ENCODE measurements at regions of chr12 and their contacts with region 1.

Region 1: DNA sequence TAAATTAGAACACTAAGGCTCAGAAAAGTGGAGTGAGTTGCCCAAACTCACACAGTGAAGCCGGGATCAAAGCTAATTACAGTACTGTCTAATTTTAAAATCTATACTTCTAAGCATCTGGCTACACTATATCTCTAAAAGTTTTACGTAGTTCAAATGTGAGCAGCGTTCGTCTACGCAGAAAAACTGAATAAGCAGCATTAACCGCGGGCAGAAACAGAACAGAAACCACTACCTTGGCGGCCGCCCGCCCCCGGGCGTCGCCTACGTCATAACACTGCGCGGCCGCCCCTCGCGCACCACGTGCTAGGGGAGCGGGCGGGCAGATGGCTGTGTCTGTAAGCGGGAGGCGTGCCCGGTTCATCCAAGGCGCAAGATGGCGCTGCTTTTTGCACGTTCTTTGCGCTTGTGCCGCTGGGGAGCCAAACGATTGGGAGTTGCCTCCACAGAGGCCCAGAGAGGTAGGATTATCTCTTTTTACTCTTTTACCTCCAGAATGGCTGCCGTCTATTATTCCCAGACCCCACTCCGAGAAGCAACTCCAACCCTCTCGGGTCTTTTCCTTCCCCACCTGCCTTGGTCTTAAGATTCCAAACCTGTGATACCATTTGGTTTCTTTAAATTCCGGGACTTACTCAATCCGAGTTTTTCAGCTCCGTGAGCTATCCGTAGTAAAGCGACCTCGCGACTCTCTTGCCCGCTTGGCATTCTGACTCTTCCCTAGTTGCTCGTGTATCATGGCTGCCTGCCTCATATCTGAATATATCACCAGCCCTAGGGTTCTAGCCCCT is at the start of gene SPRYD4:
- DNase-seq: peak; percentile 95
- ATAC-seq: peak; percentile 97
- H3K4me3 Mint-ChIP-seq: peak within 1 kb of the TSS; percentile 87
- H3K27ac Mint-ChIP-seq: peak within 1 kb of the TSS; percentile 93
- H3K4me1 Mint-ChIP-seq: peaks cover 28% of the 10 kb centered on the region
- H3K27me3 Mint-ChIP-seq: no peaks in the 10 kb centered on the region
- total RNA-seq, gene SPRYD4: 2.9 to 3.1 TPM

Region 2: DNA sequence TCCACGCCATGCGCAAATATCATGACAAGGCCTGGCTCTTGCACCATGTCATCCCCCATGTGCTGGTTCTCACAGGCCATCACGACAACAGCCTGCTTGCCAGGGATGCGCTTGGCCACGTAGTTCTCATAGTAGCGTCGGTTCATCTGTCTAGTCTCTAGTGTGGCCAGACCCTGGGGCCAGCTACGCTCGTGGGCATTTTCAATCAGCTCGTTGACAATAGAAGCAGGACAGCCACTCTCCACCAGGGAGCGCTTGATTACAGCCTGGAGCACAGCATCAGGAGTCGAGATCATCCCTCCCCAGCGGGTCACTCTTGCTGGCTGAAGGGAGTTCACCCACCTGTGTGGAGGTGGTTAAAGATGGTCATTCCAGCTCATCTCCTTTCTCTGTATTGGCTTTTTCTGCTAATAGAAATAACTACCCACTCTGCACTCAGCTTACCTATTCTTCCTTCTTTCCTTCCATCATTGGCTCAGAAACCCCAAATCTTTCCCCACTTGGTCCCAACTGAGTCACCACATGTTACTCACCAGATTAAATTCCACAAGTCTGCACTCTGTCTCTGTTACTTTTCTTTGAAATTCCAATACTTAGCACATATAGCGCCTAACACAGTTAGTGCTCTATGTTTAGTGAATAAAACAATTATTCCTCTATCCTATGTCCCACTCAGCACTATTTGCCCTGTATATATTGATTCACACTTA is 261.8 kb before region 1 on chr12:
- CTCF ChIA-PET with region 1: interaction called, 17 read pairs
- POLR2A ChIA-PET with region 1: no interaction called
- DNase-seq: peak; percentile 56
- ATAC-seq: peak; percentile 62
- H3K4me3 Mint-ChIP-seq: no peak overlapping the region
- H3K27ac Mint-ChIP-seq: no peak overlapping the region
- H3K4me1 Mint-ChIP-seq: no peaks in the 10 kb centered on the region
- H3K27me3 Mint-ChIP-seq: no peaks in the 10 kb centered on the region

Region 3: GRCh38 chr12:56286044-56286830 is 182.2 kb before region 1 on chr12:
- CTCF ChIA-PET with region 1: interaction called, 13 read pairs
- POLR2A ChIA-PET with region 1: no interaction called
- DNase-seq: no peak
- ATAC-seq: no peak
- H3K4me3 Mint-ChIP-seq: no peak overlapping the region
- H3K27ac Mint-ChIP-seq: no peak overlapping the region
- H3K4me1 Mint-ChIP-seq: peaks cover 20% of the 10 kb centered on the region
- H3K27me3 Mint-ChIP-seq: no peaks in the 10 kb centered on the region

Region 4: DNA sequence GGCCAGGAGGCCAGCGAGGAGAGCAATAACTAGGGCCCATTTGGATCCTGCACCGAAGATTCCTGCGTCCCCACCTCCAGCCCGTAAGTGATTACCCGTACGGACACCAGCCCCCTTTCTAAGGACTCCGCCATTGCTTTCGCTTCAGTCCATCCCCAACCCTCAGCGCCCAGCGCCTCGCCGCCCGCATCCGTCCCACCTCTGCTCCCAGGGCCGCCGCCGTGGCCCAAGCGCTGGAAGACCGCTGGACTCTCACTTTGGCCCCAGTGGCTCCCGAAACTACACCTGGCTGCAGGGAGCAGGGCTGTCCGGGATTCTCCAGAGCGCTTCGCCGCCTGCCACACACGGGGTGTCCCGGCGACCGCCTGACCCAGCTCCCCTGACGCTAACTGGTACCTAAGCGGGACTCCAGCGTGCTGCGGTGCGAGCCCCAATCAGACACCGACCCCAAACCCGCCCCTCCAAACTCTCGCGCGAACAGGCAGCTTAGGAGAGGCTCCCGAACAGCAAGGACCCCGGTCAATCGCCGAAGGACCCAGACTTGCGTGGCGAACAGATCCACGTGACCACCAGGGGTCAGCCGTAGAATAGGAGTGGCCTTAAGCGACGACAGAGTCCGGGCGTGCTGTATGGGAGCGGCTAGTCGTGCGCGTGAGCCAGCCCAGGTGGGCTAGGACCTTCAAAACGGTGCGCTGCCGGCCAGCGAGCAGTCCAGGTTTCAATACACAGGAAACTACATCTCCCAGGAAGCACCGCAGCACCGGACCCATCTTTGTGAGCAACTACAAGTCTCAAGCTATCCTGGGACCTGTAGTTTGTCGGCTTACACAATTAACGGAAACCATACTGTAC is 152.6 kb before region 1 on chr12 and contains the start of gene CNPY2:
- CTCF ChIA-PET with region 1: interaction called, 17 read pairs
- POLR2A ChIA-PET with region 1: interaction called, 5 read pairs
- DNase-seq: peak; percentile 98
- ATAC-seq: peak; percentile 96
- H3K4me3 Mint-ChIP-seq: peak within 1 kb of the TSS; percentile 99
- H3K27ac Mint-ChIP-seq: peak within 1 kb of the TSS; percentile 98
- H3K4me1 Mint-ChIP-seq: peaks cover 16% of the 10 kb centered on the region
- H3K27me3 Mint-ChIP-seq: no peaks in the 10 kb centered on the region
- total RNA-seq, gene CNPY2: 112 to 113 TPM

Region 5: GRCh38 chr12:56359851-56360767 is 108.3 kb before region 1 on chr12 and contains the start of gene STAT2:
- CTCF ChIA-PET with region 1: interaction called, 62 read pairs
- POLR2A ChIA-PET with region 1: interaction called, 11 read pairs
- DNase-seq: peak; percentile 100
- ATAC-seq: peak; percentile 98
- H3K4me3 Mint-ChIP-seq: peak within 1 kb of the TSS; percentile 93
- H3K27ac Mint-ChIP-seq: peak within 1 kb of the TSS; percentile 97
- H3K4me1 Mint-ChIP-seq: peaks cover 25% of the 10 kb centered on the region
- H3K27me3 Mint-ChIP-seq: no peaks in the 10 kb centered on the region
- total RNA-seq, gene STAT2: 193 to 194 TPM

Region 6: GRCh38 chr12:56408799-56409417 is 59.5 kb before region 1 on chr12:
- CTCF ChIA-PET with region 1: no interaction called
- POLR2A ChIA-PET with region 1: no interaction called
- DNase-seq: no peak
- ATAC-seq: no peak
- H3K4me3 Mint-ChIP-seq: no peak overlapping the region
- H3K27ac Mint-ChIP-seq: no peak overlapping the region
- H3K4me1 Mint-ChIP-seq: no peaks in the 10 kb centered on the region
- H3K27me3 Mint-ChIP-seq: no peaks in the 10 kb centered on the region

Measured in activated CD8-positive, alpha-beta T cell treated with anti-CD3 and anti-CD28 coated beads, Interleukin-2, amount 10 ng/mL, durations not matched to agents 7 days and 5 days (primary cell).